ENCODE measurements at regions of chr5 and their contacts with region 1.

Region 1: GRCh38 chr5:176447982-176448608 is at the start of gene FAF2:
- DNase-seq: peak; percentile 99
- ATAC-seq: peak; percentile 95 to 97
- H3K4me3 ChIP-seq: peak within 1 kb of the TSS; percentile 83
- H3K27ac ChIP-seq: peak within 1 kb of the TSS; percentile 96
- H3K4me1 ChIP-seq: peaks cover 24% of the 10 kb centered on the region
- CTCF ChIP-seq: peak; percentile 96
- EP300 ChIP-seq: no peak
- POLR2A ChIP-seq: peak; percentile 83
- RAD21 ChIP-seq: peak in 1 of 2 experiments; percentile 28; a peak in 2 of 5 replicates
- polyA plus RNA-seq, gene FAF2: 90.3 and 90.6 TPM in 2 replicates

Region 2: DNA sequence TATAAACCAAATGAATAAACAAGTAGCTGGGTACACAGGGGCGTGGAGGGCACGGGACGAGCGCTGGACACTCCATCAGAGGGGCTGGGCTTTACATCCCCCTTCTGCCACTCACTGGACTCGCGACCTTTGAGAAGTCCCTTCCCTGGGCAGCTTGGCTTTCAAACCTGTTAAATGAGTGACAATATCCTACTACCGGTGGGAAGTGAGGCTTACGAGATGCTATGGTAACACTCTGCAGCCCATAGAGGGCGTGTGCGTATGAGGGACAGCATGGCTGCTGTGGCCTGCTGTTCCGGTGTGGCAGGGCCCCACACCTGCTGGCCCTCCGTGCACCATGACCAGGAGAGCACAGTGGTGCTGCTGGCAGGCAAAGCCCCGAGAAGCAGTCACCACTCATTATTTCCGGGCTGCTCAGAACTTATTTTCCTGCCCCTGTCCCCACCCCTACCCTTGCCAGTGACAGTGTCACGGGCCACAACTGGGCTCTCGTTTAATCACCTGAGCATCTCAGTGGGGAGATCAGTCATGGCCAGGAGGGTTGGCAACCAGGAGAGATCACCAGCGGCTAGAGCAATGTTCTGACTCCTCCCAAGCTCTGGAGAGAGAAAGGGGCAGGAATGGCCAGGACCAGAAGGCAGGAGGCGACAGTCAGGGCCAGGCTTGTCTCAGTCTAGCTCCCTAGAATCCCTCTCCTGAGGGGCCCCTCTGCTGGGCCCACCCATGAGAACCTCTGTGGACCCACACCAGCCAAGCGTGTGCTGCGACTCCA is 42.3 kb before region 1 on chr5:
- CTCF ChIA-PET with region 1: interaction called, 11 read pairs
- POLR2A ChIA-PET with region 1: no interaction called
- DNase-seq: peak in 1 of 2 experiments; percentile 44
- ATAC-seq: peak; percentile 70 to 80; a peak in 5 of 6 replicates
- H3K4me3 ChIP-seq: no peak overlapping the region
- H3K27ac ChIP-seq: no peak overlapping the region
- H3K4me1 ChIP-seq: peaks cover 9% of the 10 kb centered on the region; the same call in 2 of the 3 replicates
- CTCF ChIP-seq: 0 out of 3 replicates have a peak, but pooled peaks have one; percentile 16
- EP300 ChIP-seq: no peak
- POLR2A ChIP-seq: no peak
- RAD21 ChIP-seq: peak in 1 of 2 experiments; percentile 16; a peak in 1 of 5 replicates

Region 3: GRCh38 chr5:176436661-176437071 is 11.4 kb before region 1 on chr5:
- CTCF ChIA-PET with region 1: interaction called, 31 read pairs
- POLR2A ChIA-PET with region 1: interaction called, 5 read pairs
- DNase-seq: no peak
- ATAC-seq: peak in 1 of 2 experiments; percentile 41; a peak in 2 of 6 replicates
- H3K4me3 ChIP-seq: no peak overlapping the region
- H3K27ac ChIP-seq: no peak overlapping the region
- H3K4me1 ChIP-seq: peaks cover 18% of the 10 kb centered on the region; the same call in 2 of the 3 replicates
- CTCF ChIP-seq: no peak
- EP300 ChIP-seq: no peak
- POLR2A ChIP-seq: no peak
- RAD21 ChIP-seq: no peak

Region 4: GRCh38 chr5:176466245-176466871 is 18.3 kb after region 1 on chr5:
- CTCF ChIA-PET with region 1: interaction called, 23 read pairs
- POLR2A ChIA-PET with region 1: interaction called, 10 read pairs
- DNase-seq: peak in 1 of 2 experiments; percentile 61
- ATAC-seq: peak; percentile 68 to 78
- H3K4me3 ChIP-seq: no peak overlapping the region
- H3K27ac ChIP-seq: peak overlapping the region in 1 of 2 experiments; percentile 7; a peak in 1 of 6 replicates
- H3K4me1 ChIP-seq: peaks cover 29% of the 10 kb centered on the region
- CTCF ChIP-seq: no peak
- EP300 ChIP-seq: no peak
- POLR2A ChIP-seq: no peak
- RAD21 ChIP-seq: no peak

Region 5: GRCh38 chr5:176537608-176538504 is 89.8 kb after region 1 on chr5:
- CTCF ChIA-PET with region 1: interaction called, 18 read pairs
- POLR2A ChIA-PET with region 1: interaction called, 16 read pairs
- DNase-seq: peak; percentile 94 to 99
- ATAC-seq: peak; percentile 73 to 84
- H3K4me3 ChIP-seq: peak overlapping the region; percentile 84
- H3K27ac ChIP-seq: peak overlapping the region; percentile 95 to 97
- H3K4me1 ChIP-seq: peaks cover 56% of the 10 kb centered on the region
- CTCF ChIP-seq: no peak
- EP300 ChIP-seq: no peak
- POLR2A ChIP-seq: no peak; the same call in 1 of the 2 replicates
- RAD21 ChIP-seq: no peak

Measured in A549 (cell line).